ENCODE measurements at regions of chr1 and their contacts with region 1.

Region 1: GRCh38 chr1:115112496-115113375 is 23.4 kb upstream of the TSPAN2 start:
- DNase-seq: peak; percentile 53
- H3K4me3 ChIP-seq: no peak overlapping the region; a peak in 1 of 4 replicates
- H3K27ac ChIP-seq: no peak overlapping the region; a peak in 1 of 4 replicates
- H3K4me1 ChIP-seq: peaks cover 7 to 9% of the 10 kb centered on the region in 2 experiments; a peak in 1 of 4 replicates
- H3K27me3 ChIP-seq: no peaks in the 10 kb centered on the region
- CTCF ChIP-seq: peak; percentile 97
- EP300 ChIP-seq: no peak
- RAD21 ChIP-seq: peak; percentile 89

Region 2: GRCh38 chr1:114346480-114347029 is 766.2 kb before region 1 on chr1:
- CTCF ChIA-PET with region 1: interaction called, 11 read pairs
- POLR2A ChIA-PET with region 1: no interaction called
- DNase-seq: peak; percentile 92
- H3K4me3 ChIP-seq: peak overlapping the region; percentile 52 to 62
- H3K27ac ChIP-seq: no peak overlapping the region
- H3K4me1 ChIP-seq: peaks cover 0 to 7% of the 10 kb centered on the region in 2 experiments; a peak in 1 of 4 replicates
- H3K27me3 ChIP-seq: 0 out of 2 replicates have a peak, but pooled peaks cover 5% of the 10 kb centered on the region
- CTCF ChIP-seq: peak; percentile 100
- EP300 ChIP-seq: no peak
- RAD21 ChIP-seq: peak; percentile 96

Region 3: DNA sequence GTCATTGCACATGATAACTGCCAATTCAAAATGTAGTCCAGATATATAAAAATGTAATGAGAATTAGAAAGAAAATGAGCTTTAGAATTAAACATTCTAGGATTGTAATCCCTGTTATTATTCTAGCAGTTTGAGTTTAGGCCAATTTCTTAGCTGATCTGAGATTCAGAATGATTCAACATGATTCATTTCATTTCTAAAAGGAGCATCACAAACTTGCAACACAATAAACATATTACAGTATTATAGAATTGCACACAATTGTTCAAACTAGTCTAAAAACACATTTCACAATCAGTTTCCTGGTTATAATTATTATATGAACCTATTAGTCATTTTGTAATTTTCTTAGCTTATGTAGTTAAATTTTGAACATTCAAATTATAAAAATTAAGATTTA is 126.5 kb before region 1 on chr1:
- CTCF ChIA-PET with region 1: interaction called, 53 read pairs
- POLR2A ChIA-PET with region 1: no interaction called
- DNase-seq: no peak
- H3K4me3 ChIP-seq: no peak overlapping the region
- H3K27ac ChIP-seq: no peak overlapping the region
- H3K4me1 ChIP-seq: no peaks in the 10 kb centered on the region
- H3K27me3 ChIP-seq: no peaks in the 10 kb centered on the region
- CTCF ChIP-seq: no peak
- EP300 ChIP-seq: no peak
- RAD21 ChIP-seq: no peak

Region 4: DNA sequence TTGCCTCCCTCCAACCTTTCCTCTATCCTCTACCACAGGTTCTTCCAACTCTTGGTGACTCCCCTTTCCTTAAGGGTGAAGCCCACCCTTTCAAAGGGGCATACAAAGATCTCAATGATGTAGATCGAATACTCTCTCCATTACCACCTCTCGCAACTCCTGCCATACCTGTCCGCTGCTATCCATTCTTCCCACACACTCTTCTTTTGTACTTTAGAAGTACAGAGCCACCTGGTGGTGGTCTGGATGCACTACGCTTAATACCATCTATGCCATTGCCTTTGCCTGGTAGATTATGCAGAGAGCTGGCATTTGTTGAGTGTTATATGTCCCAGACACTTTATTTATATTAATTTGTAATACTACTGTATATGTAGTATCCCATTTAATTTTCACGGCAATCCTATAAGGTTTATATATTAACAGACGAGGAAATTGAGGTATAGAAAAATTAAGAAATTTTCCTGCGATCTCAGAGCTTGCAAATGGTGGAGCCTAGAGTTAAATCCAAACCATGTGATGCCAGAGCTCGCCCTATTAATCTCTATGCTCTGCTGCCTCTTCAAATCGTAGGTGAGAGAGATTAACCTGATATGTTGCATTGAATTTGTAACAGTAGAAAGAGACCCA is 60.2 kb before region 1 on chr1:
- CTCF ChIA-PET with region 1: interaction called, 23 read pairs
- POLR2A ChIA-PET with region 1: no interaction called
- DNase-seq: peak; percentile 61
- H3K4me3 ChIP-seq: no peak overlapping the region; a peak in 1 of 4 replicates
- H3K27ac ChIP-seq: no peak overlapping the region
- H3K4me1 ChIP-seq: no peaks in the 10 kb centered on the region
- H3K27me3 ChIP-seq: no peaks in the 10 kb centered on the region
- CTCF ChIP-seq: peak; percentile 88
- EP300 ChIP-seq: no peak
- RAD21 ChIP-seq: peak; percentile 68

Region 5: DNA sequence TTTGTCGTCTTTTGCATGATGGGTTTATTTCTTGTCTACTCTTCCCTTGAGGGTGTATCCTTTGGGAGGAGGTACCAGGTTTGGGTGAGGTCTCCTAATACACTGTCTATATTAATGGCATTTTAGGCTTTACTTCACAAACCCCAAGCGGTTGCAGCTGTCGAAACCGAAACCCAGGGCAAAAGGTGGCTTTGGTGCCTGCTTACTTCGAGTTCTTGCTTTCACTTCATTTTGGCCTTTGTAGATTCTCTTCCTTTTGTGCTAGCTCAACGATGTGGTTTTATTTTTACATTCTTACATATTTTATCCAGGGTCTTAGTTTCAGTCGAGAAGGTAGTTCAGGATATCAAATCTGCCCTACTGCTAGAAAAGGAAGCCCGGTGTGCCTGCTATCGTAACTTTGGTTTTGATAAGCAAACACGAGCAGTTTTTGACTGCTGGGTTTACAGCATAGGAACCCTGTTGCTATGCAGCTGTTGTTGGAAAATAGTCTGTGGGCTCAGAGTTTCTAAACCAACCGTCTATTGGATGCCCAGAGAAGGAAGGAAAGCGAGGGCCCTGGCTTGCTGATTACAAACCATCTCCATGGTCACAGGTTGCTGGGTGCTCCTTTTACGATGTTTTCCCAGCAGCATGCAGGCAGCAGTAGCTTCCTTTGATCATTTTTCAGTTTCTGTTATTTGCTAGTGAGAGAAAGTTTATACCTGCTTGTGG is 13.6 kb before region 1 on chr1:
- CTCF ChIA-PET with region 1: interaction called, 15 read pairs
- POLR2A ChIA-PET with region 1: no interaction called
- DNase-seq: no peak
- H3K4me3 ChIP-seq: no peak overlapping the region
- H3K27ac ChIP-seq: no peak overlapping the region
- H3K4me1 ChIP-seq: no peaks in the 10 kb centered on the region
- H3K27me3 ChIP-seq: no peaks in the 10 kb centered on the region
- CTCF ChIP-seq: no peak
- EP300 ChIP-seq: no peak
- RAD21 ChIP-seq: no peak

Region 6: GRCh38 chr1:115133440-115133839 is 20.7 kb after region 1 on chr1:
- CTCF ChIA-PET with region 1: interaction called, 29 read pairs
- POLR2A ChIA-PET with region 1: no interaction called
- DNase-seq: no peak
- H3K4me3 ChIP-seq: no peak overlapping the region
- H3K27ac ChIP-seq: peak overlapping the region in 1 of 2 experiments; percentile 82; a peak in 2 of 4 replicates
- H3K4me1 ChIP-seq: peaks cover 6 to 25% of the 10 kb centered on the region in 2 experiments; a peak in 3 of 4 replicates
- H3K27me3 ChIP-seq: no peaks in the 10 kb centered on the region
- CTCF ChIP-seq: no peak
- EP300 ChIP-seq: no peak
- RAD21 ChIP-seq: no peak

Region 7: GRCh38 chr1:115296981-115297380 is 184.2 kb after region 1 on chr1:
- CTCF ChIA-PET with region 1: no interaction called
- POLR2A ChIA-PET with region 1: no interaction called
- DNase-seq: no peak
- H3K4me3 ChIP-seq: no peak overlapping the region
- H3K27ac ChIP-seq: no peak overlapping the region
- H3K4me1 ChIP-seq: peaks cover 12 to 32% of the 10 kb centered on the region in 2 experiments
- H3K27me3 ChIP-seq: no peaks in the 10 kb centered on the region
- CTCF ChIP-seq: no peak
- EP300 ChIP-seq: no peak
- RAD21 ChIP-seq: no peak

Region 8: GRCh38 chr1:115469703-115470476 is 357.2 kb after region 1 on chr1:
- CTCF ChIA-PET with region 1: interaction called, 10 read pairs
- POLR2A ChIA-PET with region 1: no interaction called
- DNase-seq: peak; percentile 77
- H3K4me3 ChIP-seq: peak overlapping the region in 1 of 2 experiments; percentile 50; a peak in 1 of 4 replicates
- H3K27ac ChIP-seq: peak overlapping the region in 1 of 2 experiments; percentile 64; a peak in 3 of 4 replicates
- H3K4me1 ChIP-seq: peaks cover 8 to 9% of the 10 kb centered on the region in 2 experiments; a peak in 1 of 4 replicates
- H3K27me3 ChIP-seq: no peaks in the 10 kb centered on the region
- CTCF ChIP-seq: peak; percentile 97
- EP300 ChIP-seq: no peak
- RAD21 ChIP-seq: peak; percentile 95